Right lobe of liver (tissue), 6 donors: ENCODE measurements at regions of chr2 and their contacts with region 1.

Region 1: GRCh38 chr2:171160119-171160955 is at the start of gene TLK1:
- DNase-seq: peak; percentile 78 to 87 (median 83)
- ATAC-seq: peak; percentile 64 to 81 (median 79)
- H3K4me3 ChIP-seq: peak within 1 kb of the TSS; percentile 71 to 76 (median 76)
- H3K27ac ChIP-seq: peak within 1 kb of the TSS; percentile 75 to 91 (median 88)
- H3K4me1 ChIP-seq: peaks cover 0 to 35% (median 2%) of the 10 kb centered on the region in 4 donors
- H3K27me3 ChIP-seq: no peaks in the 10 kb centered on the region
- CTCF ChIP-seq: no peak
- POLR2A ChIP-seq: peak; percentile 72
- total RNA-seq, gene TLK1: 18.4 to 40.2 (median 29.0) TPM

Region 2: GRCh38 chr2:171109571-171109970 is 50.8 kb before region 1 on chr2:
- intact Hi-C with region 1: no loop called
- DNase-seq: no peak
- ATAC-seq: no peak
- H3K4me3 ChIP-seq: no peak overlapping the region
- H3K27ac ChIP-seq: no peak overlapping the region
- H3K4me1 ChIP-seq: no peaks in the 10 kb centered on the region
- H3K27me3 ChIP-seq: no peaks in the 10 kb centered on the region
- CTCF ChIP-seq: no peak
- POLR2A ChIP-seq: no peak

Region 3: DNA sequence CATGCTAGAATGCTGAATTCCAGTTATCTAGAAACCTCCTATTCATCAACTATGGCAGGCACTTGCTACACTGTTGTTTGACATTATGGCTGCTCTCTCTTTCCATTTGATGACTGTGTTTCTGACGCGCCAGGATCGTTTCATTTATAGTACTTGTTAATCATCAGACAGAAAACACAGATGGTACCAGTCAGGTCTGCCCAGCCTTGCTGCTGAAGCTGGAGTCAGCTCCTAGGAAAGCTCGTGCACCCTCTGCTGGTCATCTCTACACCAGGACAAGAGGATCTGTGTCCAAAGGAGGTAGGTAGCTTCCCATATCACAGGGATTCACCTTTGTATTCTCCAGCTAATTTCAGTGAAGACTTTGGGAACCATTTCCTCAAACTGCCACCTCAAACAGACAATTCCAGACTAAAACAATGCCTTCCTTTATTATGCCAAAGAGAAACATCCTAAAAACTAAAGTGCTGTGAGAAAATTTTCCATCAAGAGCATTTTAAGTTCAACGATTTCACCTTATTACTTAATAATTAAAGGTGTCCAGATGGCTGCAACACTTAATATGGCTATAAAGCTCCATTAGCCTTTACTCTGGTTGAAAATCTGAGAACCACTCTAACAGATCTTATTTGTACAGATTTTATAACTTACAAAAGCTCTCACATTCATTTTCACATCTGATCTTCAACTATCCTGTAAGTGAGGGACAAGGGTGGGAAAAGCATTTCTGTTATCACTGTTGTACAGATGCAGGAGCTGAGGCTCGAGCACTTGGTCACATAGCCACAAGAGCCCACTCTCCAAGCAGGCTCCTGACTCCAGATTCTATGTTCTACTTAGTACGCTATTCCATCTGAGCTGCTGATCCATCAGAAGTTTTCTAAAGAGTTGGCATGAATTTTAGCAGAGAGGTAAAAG is 255.9 kb after region 1 on chr2:
- intact Hi-C with region 1: loop called in 1 of 2 experiments (anchors 10 kb)
- DNase-seq: peak; percentile 88 to 91 (median 88)
- ATAC-seq: peak; percentile 100
- H3K4me3 ChIP-seq: peak overlapping the region in 1 of 3 donors; percentile 8
- H3K27ac ChIP-seq: no peak overlapping the region
- H3K4me1 ChIP-seq: peaks cover 0 to 4% (median 0%) of the 10 kb centered on the region in 4 donors
- H3K27me3 ChIP-seq: no peaks in the 10 kb centered on the region
- CTCF ChIP-seq: peak; percentile 81 to 87 (median 86)
- POLR2A ChIP-seq: no peak